Pancreas (tissue), 10 donors: ENCODE measurements at regions of chr7 and their contacts with region 1.

Region 1: DNA sequence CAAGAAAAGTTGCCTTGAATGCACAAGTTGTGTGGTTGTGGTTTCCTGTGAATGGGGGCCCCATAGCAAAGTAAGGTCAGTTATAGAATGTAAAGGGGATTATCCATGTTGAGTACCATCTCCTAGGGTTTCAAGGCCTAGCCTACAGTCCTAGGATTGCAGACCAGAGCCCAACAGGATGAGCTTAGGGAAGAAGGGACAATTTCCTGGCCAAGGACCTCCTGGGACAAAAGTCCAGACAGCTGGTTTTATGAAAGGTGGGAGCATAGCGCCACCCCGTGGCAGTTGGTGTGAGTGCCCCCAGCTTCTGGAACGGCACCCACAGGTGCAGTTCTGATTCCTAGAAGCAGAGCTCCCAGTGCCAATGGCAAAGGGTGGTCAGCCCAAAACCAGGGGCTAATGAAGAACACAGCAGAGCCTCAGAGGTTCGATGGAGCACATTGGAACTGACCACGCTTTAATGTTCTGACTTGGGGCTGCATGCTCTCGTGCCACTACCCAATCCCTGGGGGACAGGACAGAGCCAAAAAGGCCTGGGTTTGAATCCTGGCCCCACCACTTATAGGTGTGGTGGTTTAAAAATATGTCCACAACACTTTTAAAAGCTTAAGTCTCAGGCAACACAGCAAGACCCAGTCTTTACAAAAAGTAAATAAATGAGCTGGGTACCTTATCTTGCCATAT is 25.8 kb upstream of the TMEM120A start:
- DNase-seq: peak; percentile 40 to 88 (median 76)
- ATAC-seq: peak; percentile 68 to 95 (median 92)
- H3K4me3 ChIP-seq: no peak overlapping the region
- H3K27ac ChIP-seq: no peak overlapping the region
- H3K4me1 ChIP-seq: no peaks in the 10 kb centered on the region
- H3K27me3 ChIP-seq: no peaks in the 10 kb centered on the region
- CTCF ChIP-seq: peak; percentile 84 to 86 (median 84)

Region 2: GRCh38 chr7:75861636-75862035 is 158.5 kb before region 1 on chr7:
- intact Hi-C with region 1: loop called (anchors 5 to 10 kb)
- DNase-seq: no peak
- ATAC-seq: peak in 2 of 4 donors; percentile 53
- H3K4me3 ChIP-seq: no peak overlapping the region
- H3K27ac ChIP-seq: no peak overlapping the region
- H3K4me1 ChIP-seq: no peaks in the 10 kb centered on the region
- H3K27me3 ChIP-seq: no peaks in the 10 kb centered on the region
- CTCF ChIP-seq: no peak

Region 3: DNA sequence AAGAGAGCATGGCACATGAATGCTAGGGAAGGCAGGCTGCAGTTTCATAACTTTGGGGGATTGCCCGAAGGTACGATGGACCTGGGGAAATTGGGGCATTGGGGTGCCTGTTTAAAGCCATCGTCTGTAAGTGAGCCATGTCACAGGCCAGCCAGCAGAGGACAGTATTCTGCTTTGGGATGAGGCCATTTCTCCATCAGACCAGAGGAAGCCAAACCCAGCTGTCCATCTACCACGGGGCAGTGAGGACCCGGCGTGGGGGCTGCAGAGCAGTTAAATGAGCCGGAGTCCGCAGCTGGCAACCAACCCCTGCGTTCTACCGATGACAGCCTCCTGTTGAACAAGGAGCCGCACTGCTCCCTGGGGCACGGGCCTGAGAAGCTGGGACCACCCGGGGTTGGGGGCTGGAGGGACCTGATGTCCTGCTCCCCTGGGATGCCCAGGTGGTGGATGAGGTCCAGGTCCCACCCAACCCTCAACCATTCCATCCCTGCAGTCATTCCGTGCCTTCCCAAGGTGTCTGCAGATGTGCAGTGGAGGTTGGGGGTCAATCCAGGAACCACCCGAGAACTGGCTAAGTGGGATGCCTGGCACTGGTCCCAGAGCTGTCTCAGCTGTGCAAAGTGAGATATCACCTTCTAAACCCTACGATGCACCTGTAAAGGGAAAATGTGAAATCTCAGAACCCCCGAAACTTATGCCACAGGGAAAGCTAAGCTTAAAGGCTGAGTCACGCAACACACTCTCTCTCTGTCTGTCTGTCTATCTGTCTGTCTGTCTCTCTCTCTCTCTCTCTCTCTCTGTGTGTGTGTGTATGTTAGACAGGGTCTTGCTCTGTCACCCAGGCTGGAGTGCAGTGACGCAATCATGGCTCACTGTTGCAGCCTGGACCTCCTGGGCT is 153.4 kb before region 1 on chr7:
- intact Hi-C with region 1: loop called (anchors 5 to 10 kb)
- DNase-seq: peak; percentile 37 to 74 (median 54)
- ATAC-seq: peak; percentile 85 to 98 (median 97)
- H3K4me3 ChIP-seq: no peak overlapping the region
- H3K27ac ChIP-seq: no peak overlapping the region
- H3K4me1 ChIP-seq: no peaks in the 10 kb centered on the region
- H3K27me3 ChIP-seq: no peaks in the 10 kb centered on the region
- CTCF ChIP-seq: peak; percentile 63 to 94 (median 88)

Region 4: GRCh38 chr7:76201730-76202665 is 181.8 kb after region 1 on chr7 and contains the start of gene SRRM3:
- intact Hi-C with region 1: no loop called
- DNase-seq: peak; percentile 68 to 95 (median 85)
- ATAC-seq: peak; percentile 99 to 100 (median 99)
- H3K4me3 ChIP-seq: peak within 1 kb of the TSS in 1 of 4 donors; percentile 41
- H3K27ac ChIP-seq: no peak within 1 kb of the TSS
- H3K4me1 ChIP-seq: peaks cover 0 to 3% (median 0%) of the 10 kb centered on the region in 3 donors
- H3K27me3 ChIP-seq: no peaks in the 10 kb centered on the region
- CTCF ChIP-seq: peak in 3 of 4 donors; percentile 39 to 47 (median 45)
- total RNA-seq, gene SRRM3: 1.2 to 4.6 (median 1.6) TPM